Gastrocnemius medialis (tissue), 4 donors: ENCODE measurements at regions of chr1 and their contacts with region 1.

Region 1: GRCh38 chr1:108746372-108747205 is at the start of gene STXBP3:
- DNase-seq: peak; percentile 94 to 98
- ATAC-seq: peak; percentile 94 to 95
- H3K4me3 ChIP-seq: peak within 1 kb of the TSS; percentile 88 to 98 (median 91)
- H3K27ac ChIP-seq: peak within 1 kb of the TSS; percentile 91 to 98 (median 96)
- H3K4me1 ChIP-seq: peaks cover 5 to 14% of the 10 kb centered on the region in 2 donors
- H3K27me3 ChIP-seq: no peaks in the 10 kb centered on the region
- CTCF ChIP-seq: peak; percentile 75 to 95 (median 89)
- POLR2A ChIP-seq: peak; percentile 91 to 94
- total RNA-seq, gene STXBP3: 18.4 to 39.4 (median 24.3) TPM

Region 2: GRCh38 chr1:108559215-108560186 is 187.1 kb before region 1 on chr1 and contains the start of gene EEIG2:
- in situ Hi-C with region 1: no loop called
- intact Hi-C with region 1: loop called (anchors 5 kb)
- DNase-seq: peak; percentile 50 to 69
- ATAC-seq: peak; percentile 89 to 94
- H3K4me3 ChIP-seq: peak within 1 kb of the TSS; percentile 58 to 75 (median 62)
- H3K27ac ChIP-seq: peak within 1 kb of the TSS; percentile 44 to 65 (median 54)
- H3K4me1 ChIP-seq: peaks cover 13 to 14% of the 10 kb centered on the region in 2 donors
- H3K27me3 ChIP-seq: no peaks in the 10 kb centered on the region
- CTCF ChIP-seq: peak; percentile 55 to 90 (median 81)
- POLR2A ChIP-seq: peak in 1 of 2 donors; percentile 28
- total RNA-seq, gene EEIG2: 0.41 to 3.6 (median 1.5) TPM

Region 3: DNA sequence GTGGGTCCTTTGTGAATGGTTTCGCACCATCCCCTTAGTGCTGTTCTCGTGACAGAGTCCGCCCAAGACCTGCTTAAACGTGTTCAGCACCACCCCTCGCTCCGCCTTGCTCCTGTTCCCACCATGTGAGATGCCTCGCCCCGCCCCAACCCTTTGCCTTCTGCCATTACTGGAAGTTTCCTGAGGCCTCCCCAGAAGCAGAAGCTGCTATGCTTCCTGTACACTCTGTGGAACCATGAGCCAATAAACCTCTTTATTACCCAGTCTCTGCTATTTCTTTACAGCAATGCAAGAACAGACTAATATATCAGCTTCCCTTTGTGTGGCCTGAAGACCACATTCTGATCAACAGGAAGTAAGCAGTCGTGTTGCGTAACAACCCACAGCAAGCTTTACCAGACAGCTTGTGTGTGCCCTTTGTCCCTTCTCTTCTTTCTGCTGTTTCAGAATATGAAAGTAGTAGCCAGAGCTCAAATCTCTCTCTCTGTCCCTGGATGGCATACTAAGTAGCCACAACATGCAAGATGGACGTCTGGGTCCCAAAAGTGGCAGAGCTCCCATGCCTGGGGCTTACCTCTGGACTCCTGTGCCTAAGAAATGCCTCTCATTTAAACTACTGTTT is 99.8 kb before region 1 on chr1:
- in situ Hi-C with region 1: no loop called
- intact Hi-C with region 1: no loop called
- DNase-seq: peak; percentile 25 to 56
- ATAC-seq: peak; percentile 36 to 68
- H3K4me3 ChIP-seq: no peak overlapping the region
- H3K27ac ChIP-seq: peak overlapping the region in 2 of 4 donors; percentile 21 to 43
- H3K4me1 ChIP-seq: no peaks in the 10 kb centered on the region
- H3K27me3 ChIP-seq: no peaks in the 10 kb centered on the region
- CTCF ChIP-seq: no peak
- POLR2A ChIP-seq: no peak

Region 4: DNA sequence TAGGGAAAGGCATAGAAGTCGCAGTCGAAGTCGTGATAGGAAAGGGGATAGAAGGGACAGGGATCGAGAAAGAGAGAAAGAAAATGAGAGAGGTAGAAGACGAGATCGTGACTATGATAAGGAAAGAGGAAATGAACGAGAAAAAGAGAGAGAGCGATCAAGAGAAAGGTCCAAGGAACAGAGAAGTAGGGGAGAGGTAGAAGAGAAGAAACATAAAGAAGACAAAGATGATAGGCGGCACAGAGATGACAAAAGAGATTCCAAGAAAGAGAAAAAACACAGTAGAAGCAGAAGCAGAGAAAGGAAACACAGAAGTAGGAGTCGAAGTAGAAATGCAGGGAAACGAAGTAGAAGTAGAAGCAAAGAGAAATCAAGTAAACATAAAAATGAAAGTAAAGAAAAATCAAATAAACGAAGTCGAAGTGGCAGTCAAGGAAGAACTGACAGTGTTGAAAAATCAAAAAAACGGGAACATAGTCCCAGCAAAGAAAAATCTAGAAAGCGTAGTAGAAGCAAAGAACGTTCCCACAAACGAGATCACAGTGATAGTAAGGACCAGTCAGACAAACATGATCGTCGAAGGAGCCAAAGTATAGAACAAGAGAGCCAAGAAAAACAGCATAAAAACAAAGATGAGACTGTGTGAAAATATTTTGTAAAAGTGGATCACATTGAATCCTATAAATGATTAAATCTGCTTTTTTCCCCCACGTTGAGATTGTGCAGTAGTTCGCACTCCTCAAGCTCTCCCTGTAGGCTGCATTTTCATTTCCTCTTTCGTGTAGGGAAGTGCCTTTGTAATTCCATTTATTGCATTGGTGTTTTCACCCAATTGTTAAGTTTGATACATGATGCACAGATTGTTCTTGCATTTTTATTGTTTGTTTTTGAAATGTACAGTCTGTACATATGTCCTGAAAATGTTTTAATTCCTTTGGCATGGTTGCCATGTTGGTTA is 46.9 kb before region 1 on chr1:
- in situ Hi-C with region 1: loop called in 3 of 4 experiments (anchors 5 to 10 kb)
- intact Hi-C with region 1: no loop called
- DNase-seq: no peak
- ATAC-seq: no peak
- H3K4me3 ChIP-seq: no peak overlapping the region
- H3K27ac ChIP-seq: no peak overlapping the region
- H3K4me1 ChIP-seq: peaks cover 9 to 12% of the 10 kb centered on the region in 2 donors
- H3K27me3 ChIP-seq: no peaks in the 10 kb centered on the region
- CTCF ChIP-seq: no peak
- POLR2A ChIP-seq: no peak

Region 5: DNA sequence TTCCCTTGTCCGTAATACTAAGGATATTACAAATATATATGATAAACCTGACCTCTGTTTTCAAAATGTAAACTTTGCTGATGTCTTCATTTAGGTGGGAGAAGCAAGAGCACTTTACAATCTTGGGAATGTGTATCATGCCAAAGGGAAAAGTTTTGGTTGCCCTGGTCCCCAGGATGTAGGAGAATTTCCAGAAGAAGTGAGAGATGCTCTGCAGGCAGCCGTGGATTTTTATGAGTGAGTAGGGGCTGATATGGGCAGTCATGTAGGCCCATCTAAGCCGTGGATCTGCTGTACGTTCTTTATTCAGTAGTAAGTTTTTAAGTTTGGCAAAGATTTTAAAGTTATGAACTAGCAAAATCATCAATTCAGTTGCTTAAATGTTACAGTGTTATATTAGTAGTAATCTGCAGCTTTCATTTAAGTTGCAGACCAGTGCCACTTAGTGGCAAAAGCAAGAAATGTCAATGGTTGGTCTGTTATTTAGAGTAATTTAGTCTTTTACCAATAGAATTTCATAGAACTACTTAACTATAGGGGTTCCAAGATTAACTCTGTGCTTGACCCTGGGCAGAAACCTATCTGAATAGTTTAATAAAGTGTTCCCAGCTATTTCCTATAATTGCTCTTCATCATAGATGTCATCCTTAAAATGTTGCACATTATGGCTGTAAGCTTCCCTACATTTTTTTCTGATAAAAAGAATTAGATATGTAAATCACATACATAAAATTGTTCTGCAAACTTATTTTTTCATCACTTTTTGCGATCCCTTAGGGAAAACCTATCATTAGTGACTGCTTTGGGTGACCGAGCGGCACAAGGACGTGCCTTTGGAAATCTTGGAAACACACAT is 151.5 kb after region 1 on chr1:
- in situ Hi-C with region 1: loop called in 1 of 4 experiments (anchors 10 kb)
- intact Hi-C with region 1: loop called (anchors 5 kb)
- DNase-seq: no peak
- ATAC-seq: peak; percentile 70
- H3K4me3 ChIP-seq: no peak overlapping the region
- H3K27ac ChIP-seq: peak overlapping the region in 1 of 4 donors; percentile 62
- H3K4me1 ChIP-seq: peaks cover 5 to 8% of the 10 kb centered on the region in 2 donors
- H3K27me3 ChIP-seq: no peaks in the 10 kb centered on the region
- CTCF ChIP-seq: peak; percentile 48 to 87 (median 74)
- POLR2A ChIP-seq: no peak

Region 6: DNA sequence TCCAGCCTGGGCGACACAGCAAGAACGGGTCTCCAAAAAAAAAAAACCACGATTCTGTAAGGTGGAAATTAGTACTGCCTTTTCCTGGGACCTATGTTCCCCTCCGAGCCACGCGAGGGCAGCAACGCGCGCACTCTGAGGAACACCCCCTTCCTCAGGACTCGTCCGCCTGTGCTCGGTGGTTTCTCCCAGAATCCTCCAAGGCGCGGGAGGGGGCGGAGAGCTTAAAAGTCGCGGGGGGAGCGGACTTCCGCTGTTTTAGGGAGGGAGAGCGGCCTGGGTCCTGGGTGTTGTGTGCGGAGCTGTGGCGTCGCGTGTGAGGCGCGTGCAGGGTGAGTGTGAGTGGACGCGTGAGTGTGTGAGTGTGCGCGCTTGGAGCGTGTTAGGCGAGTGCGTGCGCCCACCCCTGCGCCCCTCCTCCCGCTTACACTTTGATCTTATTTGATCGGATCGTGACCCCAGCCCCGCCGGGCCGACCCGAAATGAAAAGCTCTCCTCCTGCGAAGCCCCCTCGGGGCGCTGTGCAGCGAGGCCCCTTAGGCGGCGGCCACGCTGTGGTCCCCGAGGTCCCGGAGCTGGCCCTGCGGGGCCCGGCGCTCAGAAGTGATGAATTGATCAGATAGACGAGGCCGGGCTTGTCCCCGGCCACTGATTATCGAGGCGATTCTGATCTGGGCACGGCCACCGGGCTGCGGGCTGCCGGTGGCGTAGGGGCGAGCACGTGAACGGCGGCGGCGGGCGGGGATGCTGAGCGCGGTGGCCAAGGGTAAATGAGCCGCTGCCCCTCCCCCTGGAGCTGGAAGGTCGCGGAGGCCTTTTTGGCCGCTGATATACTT is 353.6 kb after region 1 on chr1:
- in situ Hi-C with region 1: no loop called
- intact Hi-C with region 1: loop called (anchors 10 kb)
- DNase-seq: peak; percentile 96 to 97
- ATAC-seq: peak; percentile 97 to 98
- H3K4me3 ChIP-seq: peak overlapping the region; percentile 76 to 99 (median 93)
- H3K27ac ChIP-seq: peak overlapping the region; percentile 96 to 100 (median 98)
- H3K4me1 ChIP-seq: peaks cover 16 to 23% of the 10 kb centered on the region in 2 donors
- H3K27me3 ChIP-seq: no peaks in the 10 kb centered on the region
- CTCF ChIP-seq: peak; percentile 80 to 92 (median 85)
- POLR2A ChIP-seq: peak; percentile 94 to 95